Heart right ventricle (tissue), 16 donors: ENCODE measurements at regions of chr9 and their contacts with region 1.

Region 1: DNA sequence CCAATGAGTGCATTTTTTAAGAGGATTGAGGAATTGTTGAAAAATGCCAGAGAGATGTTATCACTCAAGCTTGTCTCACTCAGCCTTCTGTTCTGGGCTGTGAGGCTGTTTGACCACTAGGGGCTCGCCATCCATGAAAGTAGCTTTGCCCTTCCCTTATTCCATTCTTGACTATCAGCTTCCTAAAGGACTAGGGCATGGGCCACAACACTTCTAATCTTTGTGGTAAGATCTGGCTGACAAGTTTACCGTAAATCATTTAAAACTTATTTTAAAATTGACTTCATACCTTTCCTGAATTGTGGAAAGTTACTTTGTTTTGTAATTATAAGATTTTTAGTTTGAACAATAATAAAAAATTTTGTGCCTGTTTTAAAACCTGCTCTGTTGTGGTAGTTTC is 49.5 kb downstream of the TJP2 start:
- DNase-seq: peak in 1 of 2 donors; percentile 37
- ATAC-seq: peak; percentile 67 to 91 (median 80)
- H3K4me3 ChIP-seq: no peak overlapping the region
- H3K27ac ChIP-seq: peak overlapping the region in 1 of 10 donors; percentile 28
- H3K4me1 ChIP-seq: no peaks in the 10 kb centered on the region
- H3K27me3 ChIP-seq: no peaks in the 10 kb centered on the region
- CTCF ChIP-seq: peak; percentile 30 to 71 (median 62)

Region 2: DNA sequence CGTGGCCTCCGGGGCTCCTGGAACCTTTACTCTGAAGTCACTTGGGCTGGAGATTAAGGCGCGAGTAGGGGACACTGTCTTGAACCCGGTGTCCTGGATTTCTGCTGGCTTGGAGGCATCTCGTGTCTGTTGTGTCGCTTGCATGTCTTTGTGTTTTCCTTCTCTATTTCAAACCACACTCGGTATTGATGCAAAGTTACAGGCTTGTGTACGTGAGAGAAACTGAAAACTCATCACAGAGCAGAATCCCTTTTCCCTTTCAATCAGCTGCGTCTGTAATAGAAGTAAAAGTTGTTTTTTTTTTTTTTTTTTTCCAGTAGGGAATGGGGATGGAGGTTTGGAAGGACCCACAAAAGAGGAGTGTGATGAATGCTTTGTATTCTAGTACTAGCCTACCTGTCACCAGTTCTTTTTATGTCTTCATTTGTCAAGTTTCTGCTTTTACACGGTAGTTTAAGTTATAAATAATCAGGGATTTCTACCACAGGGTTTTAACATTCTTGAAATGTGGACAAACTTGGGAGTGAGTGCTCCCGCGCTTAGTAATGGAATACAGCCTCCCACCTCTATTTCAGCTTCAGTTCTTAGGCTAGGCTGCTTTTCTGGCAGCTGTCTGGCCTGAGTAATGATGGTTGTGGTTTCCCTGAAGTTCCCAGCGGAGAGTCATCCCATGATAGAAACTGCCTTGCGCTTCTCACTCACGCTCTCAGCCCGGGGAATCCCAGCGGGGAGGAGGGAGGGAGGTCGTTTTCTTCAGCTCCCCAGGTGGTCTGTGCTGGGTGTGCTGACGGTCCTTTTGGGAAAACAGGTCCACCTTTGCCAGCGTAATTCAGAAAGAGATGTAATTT is 48.8 kb before region 1 on chr9:
- intact Hi-C with region 1: no loop called
- DNase-seq: peak in 1 of 2 donors; percentile 60
- ATAC-seq: peak; percentile 23 to 68 (median 60)
- H3K4me3 ChIP-seq: peak overlapping the region; percentile 69 to 88 (median 82)
- H3K27ac ChIP-seq: peak overlapping the region; percentile 82 to 94 (median 89)
- H3K4me1 ChIP-seq: peaks cover 3 to 86% (median 63%) of the 10 kb centered on the region in 9 donors
- H3K27me3 ChIP-seq: no peaks in the 10 kb centered on the region
- CTCF ChIP-seq: no peak

Region 3: DNA sequence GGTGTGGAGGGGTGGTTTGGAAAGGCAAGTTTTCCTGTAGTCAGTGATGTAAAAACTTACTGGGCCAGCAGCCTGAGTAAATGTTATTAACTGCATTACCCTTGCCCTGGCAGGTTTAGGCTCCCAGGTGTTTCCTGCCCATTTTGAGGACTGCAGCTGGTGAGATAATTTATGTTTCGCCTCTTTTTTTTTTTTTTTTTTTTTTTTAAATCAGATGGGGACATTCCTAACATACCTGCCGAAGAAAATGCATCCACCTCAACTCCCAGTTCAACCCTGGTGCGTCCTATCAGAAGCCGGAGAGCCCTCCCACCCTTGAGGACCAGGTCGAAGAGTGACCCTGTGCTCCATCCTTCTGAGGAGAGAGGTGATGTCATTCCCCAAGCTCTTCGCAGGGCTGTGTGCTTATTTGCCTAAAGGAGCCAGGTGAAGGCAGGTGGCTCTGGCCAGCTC is 162.0 kb after region 1 on chr9:
- intact Hi-C with region 1: loop called in 3 of 10 experiments (anchors 5 to 10 kb)
- DNase-seq: no peak
- ATAC-seq: peak in 1 of 8 donors; percentile 27
- H3K4me3 ChIP-seq: no peak overlapping the region
- H3K27ac ChIP-seq: no peak overlapping the region
- H3K4me1 ChIP-seq: peaks cover 4 to 50% (median 12%) of the 10 kb centered on the region in 9 donors
- H3K27me3 ChIP-seq: no peaks in the 10 kb centered on the region
- CTCF ChIP-seq: no peak

Region 4: DNA sequence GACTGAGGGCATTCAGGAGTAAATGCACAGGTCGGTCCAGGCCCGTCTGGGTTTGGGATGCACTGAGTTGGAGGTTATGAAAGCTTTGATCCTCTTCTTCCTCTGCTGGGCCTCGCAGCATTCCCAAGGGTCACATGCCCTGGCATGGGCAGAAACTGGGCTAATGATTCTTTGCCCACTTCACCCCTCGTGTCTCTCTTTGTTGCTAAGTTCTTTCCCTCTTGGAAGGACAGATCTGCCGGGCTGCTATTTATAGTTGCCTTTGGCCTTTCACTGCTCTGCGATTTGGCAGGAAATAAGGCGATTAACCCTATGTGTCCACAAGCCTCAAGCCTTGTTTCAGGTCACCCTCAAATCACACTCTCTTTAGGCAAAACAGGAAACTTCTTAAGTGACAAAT is 168.3 kb after region 1 on chr9:
- intact Hi-C with region 1: loop called in 3 of 10 experiments (anchors 5 to 10 kb)
- DNase-seq: peak in 1 of 2 donors; percentile 68
- ATAC-seq: peak; percentile 68 to 93 (median 83)
- H3K4me3 ChIP-seq: no peak overlapping the region
- H3K27ac ChIP-seq: peak overlapping the region; percentile 63 to 90 (median 80)
- H3K4me1 ChIP-seq: peaks cover 4 to 56% (median 28%) of the 10 kb centered on the region in 9 donors
- H3K27me3 ChIP-seq: no peaks in the 10 kb centered on the region
- CTCF ChIP-seq: no peak

Region 5: DNA sequence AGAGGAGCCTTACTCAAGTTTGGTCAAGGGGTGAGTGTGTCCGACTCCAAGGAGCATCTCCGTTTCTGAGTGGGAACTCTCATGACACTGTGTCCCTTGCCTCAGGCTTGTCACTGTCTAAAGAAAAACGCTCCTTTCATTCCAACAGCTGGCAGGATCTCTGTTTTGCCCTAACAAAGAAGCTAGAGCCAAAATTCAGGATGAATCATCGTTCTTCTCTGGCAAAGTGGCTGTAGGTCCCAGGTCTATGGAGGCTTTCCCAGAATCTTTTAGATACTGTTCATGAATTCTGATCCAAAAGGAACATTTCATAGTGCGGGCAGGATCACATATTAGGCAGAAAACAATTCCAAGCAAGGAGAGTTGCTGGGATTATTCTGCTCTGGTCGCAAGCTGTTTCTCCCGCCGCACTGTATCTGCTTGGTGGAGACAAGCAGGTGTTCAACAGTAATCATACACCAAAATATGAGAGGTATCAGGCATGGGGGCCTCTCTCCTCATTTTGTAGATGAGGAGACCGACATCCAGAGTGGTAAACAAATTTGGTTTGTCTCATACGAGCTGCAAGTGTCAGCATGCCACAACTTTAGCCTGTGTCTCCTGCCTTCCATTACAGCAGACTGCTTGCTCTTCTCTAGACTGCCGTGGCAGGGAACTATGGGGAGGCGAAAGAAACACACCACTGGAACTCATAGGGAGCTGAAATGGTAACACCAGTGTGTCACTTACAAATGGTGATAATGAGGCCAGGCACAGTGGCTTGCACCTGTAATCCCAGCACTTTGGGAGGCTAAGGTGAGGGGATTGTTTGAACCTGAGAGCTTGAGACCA is 174.0 kb after region 1 on chr9:
- intact Hi-C with region 1: loop called in 2 of 10 experiments (anchors 5 to 10 kb)
- DNase-seq: no peak
- ATAC-seq: peak; percentile 35 to 67 (median 44)
- H3K4me3 ChIP-seq: peak overlapping the region in 1 of 10 donors; percentile 14
- H3K27ac ChIP-seq: peak overlapping the region in 9 of 10 donors; percentile 58 to 83 (median 72)
- H3K4me1 ChIP-seq: peaks cover 0 to 28% (median 13%) of the 10 kb centered on the region in 9 donors
- H3K27me3 ChIP-seq: no peaks in the 10 kb centered on the region
- CTCF ChIP-seq: no peak

Region 6: GRCh38 chr9:69444021-69444420 is 220.4 kb after region 1 on chr9:
- intact Hi-C with region 1: no loop called
- DNase-seq: no peak
- ATAC-seq: peak in 2 of 8 donors; percentile 40 to 47
- H3K4me3 ChIP-seq: no peak overlapping the region
- H3K27ac ChIP-seq: no peak overlapping the region
- H3K4me1 ChIP-seq: peaks cover 0 to 8% (median 0%) of the 10 kb centered on the region in 9 donors
- H3K27me3 ChIP-seq: no peaks in the 10 kb centered on the region
- CTCF ChIP-seq: no peak